Aorta (tissue), 5 donors: ENCODE measurements at regions of chr19 and their contacts with region 1.

Region 1: GRCh38 chr19:15280915-15281683 is 48.9 kb upstream of the EPHX3 start:
- DNase-seq: peak; percentile 89 to 91
- ATAC-seq: peak; percentile 86
- H3K4me3 ChIP-seq: no peak overlapping the region
- H3K27ac ChIP-seq: peak overlapping the region in 1 of 2 donors; percentile 75
- H3K4me1 ChIP-seq: peaks cover 8 to 22% of the 10 kb centered on the region in 2 donors
- H3K27me3 ChIP-seq: no peaks in the 10 kb centered on the region

Region 2: DNA sequence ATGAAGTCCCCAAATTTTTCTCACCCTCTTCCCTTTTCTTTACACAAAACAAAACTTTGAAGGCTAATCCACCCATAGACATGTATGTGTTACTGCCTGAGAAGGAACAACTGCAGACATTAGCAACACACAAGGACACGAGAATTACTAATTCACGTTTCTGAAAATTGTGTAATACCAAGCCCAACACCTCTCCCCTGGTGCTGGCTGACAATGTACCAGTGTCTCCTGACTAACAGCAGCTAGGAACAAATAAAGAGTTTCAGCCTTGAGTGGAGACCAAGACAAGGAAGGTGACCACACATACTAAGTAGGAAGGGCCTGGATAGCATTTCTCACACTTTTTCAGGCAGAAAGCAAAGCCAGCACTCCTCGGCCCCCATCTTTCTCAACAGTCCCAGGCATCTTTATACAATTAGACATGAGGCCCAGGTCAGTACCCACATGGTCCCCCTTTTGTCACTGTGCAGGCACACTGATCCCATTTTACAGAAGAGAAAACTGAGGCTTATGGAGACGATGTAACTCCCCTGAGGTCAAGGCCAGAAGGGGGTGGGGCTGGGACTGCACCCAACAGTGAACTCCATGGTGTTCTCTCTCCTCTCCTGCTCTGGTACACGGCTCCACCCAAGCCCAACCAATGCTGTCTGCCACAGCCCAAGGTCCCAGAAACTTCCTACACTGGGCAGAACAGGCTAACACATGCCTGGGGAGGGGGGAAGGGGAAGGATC is 42.6 kb after region 1 on chr19:
- intact Hi-C with region 1: loop called (anchors 5 kb)
- DNase-seq: peak; percentile 77 to 79
- ATAC-seq: peak; percentile 61
- H3K4me3 ChIP-seq: no peak overlapping the region
- H3K27ac ChIP-seq: peak overlapping the region; percentile 39 to 71
- H3K4me1 ChIP-seq: peaks cover 4 to 32% of the 10 kb centered on the region in 2 donors
- H3K27me3 ChIP-seq: no peaks in the 10 kb centered on the region

Region 3: GRCh38 chr19:15488489-15489224 is 207.6 kb after region 1 on chr19:
- intact Hi-C with region 1: no loop called
- DNase-seq: no peak
- ATAC-seq: no peak
- H3K4me3 ChIP-seq: no peak overlapping the region
- H3K27ac ChIP-seq: no peak overlapping the region
- H3K4me1 ChIP-seq: no peaks in the 10 kb centered on the region
- H3K27me3 ChIP-seq: peaks cover 0 to 2% of the 10 kb centered on the region in 2 donors